CD4-positive, alpha-beta memory T cell (primary cell): ENCODE measurements at regions of chr18 and their contacts with region 1.

Region 1: GRCh38 chr18:29060349-29060748 is 883.4 kb upstream of the CDH2 start:
- DNase-seq: no peak
- H3K4me3 ChIP-seq: no peak overlapping the region
- H3K4me3 Mint-ChIP-seq: no peak overlapping the region
- H3K27ac ChIP-seq: no peak overlapping the region
- H3K27ac Mint-ChIP-seq: no peak overlapping the region
- H3K4me1 ChIP-seq: no peaks in the 10 kb centered on the region
- H3K4me1 Mint-ChIP-seq: no peaks in the 10 kb centered on the region
- H3K27me3 ChIP-seq: no peaks in the 10 kb centered on the region
- H3K27me3 Mint-ChIP-seq: no peaks in the 10 kb centered on the region

Region 2: GRCh38 chr18:28995319-28995718 is 65.0 kb before region 1 on chr18:
- CTCF ChIA-PET with region 1: no interaction called
- POLR2A ChIA-PET with region 1: no interaction called
- intact Hi-C with region 1: loop called (anchors 10 kb)
- DNase-seq: no peak
- H3K4me3 ChIP-seq: no peak overlapping the region
- H3K4me3 Mint-ChIP-seq: no peak overlapping the region
- H3K27ac ChIP-seq: no peak overlapping the region
- H3K27ac Mint-ChIP-seq: no peak overlapping the region
- H3K4me1 ChIP-seq: no peaks in the 10 kb centered on the region
- H3K4me1 Mint-ChIP-seq: no peaks in the 10 kb centered on the region
- H3K27me3 ChIP-seq: no peaks in the 10 kb centered on the region
- H3K27me3 Mint-ChIP-seq: no peaks in the 10 kb centered on the region

Region 3: GRCh38 chr18:29012364-29012763 is 48.0 kb before region 1 on chr18:
- CTCF ChIA-PET with region 1: no interaction called
- POLR2A ChIA-PET with region 1: no interaction called
- intact Hi-C with region 1: loop called (anchors 10 kb)
- DNase-seq: no peak
- H3K4me3 ChIP-seq: no peak overlapping the region
- H3K4me3 Mint-ChIP-seq: no peak overlapping the region
- H3K27ac ChIP-seq: no peak overlapping the region
- H3K27ac Mint-ChIP-seq: no peak overlapping the region
- H3K4me1 ChIP-seq: no peaks in the 10 kb centered on the region
- H3K4me1 Mint-ChIP-seq: no peaks in the 10 kb centered on the region
- H3K27me3 ChIP-seq: no peaks in the 10 kb centered on the region
- H3K27me3 Mint-ChIP-seq: no peaks in the 10 kb centered on the region